B cell (primary cell): ENCODE measurements at regions of chr3 and their contacts with region 1.

Region 1: GRCh38 chr3:9731206-9732079 is at the start of gene BRPF1:
- DNase-seq: peak; percentile 99
- ATAC-seq: peak; percentile 94
- H3K4me3 ChIP-seq: peak within 1 kb of the TSS; percentile 76 to 93 (median 81)
- H3K4me3 Mint-ChIP-seq: peak within 1 kb of the TSS; percentile 97
- H3K27ac ChIP-seq: peak within 1 kb of the TSS; percentile 87 to 94
- H3K27ac Mint-ChIP-seq: peak within 1 kb of the TSS; percentile 97
- H3K4me1 ChIP-seq: peaks cover 28 to 36% of the 10 kb centered on the region in 2 donors
- H3K4me1 Mint-ChIP-seq: peaks cover 59% of the 10 kb centered on the region
- H3K27me3 ChIP-seq: no peaks in the 10 kb centered on the region
- H3K27me3 Mint-ChIP-seq: no peaks in the 10 kb centered on the region
- CTCF ChIP-seq: no peak
- total RNA-seq, gene BRPF1: 36.5 and 40.1 TPM in 2 replicates

Region 2: GRCh38 chr3:8963137-8963869 is 768.1 kb before region 1 on chr3 and contains the start of gene RAD18:
- CTCF ChIA-PET with region 1: no interaction called
- POLR2A ChIA-PET with region 1: no interaction called
- intact Hi-C with region 1: loop called (anchors 1 kb)
- DNase-seq: peak; percentile 95
- ATAC-seq: peak; percentile 97
- H3K4me3 ChIP-seq: peak within 1 kb of the TSS; percentile 79 to 93 (median 85)
- H3K4me3 Mint-ChIP-seq: peak within 1 kb of the TSS; percentile 89
- H3K27ac ChIP-seq: peak within 1 kb of the TSS; percentile 81 to 93
- H3K27ac Mint-ChIP-seq: peak within 1 kb of the TSS; percentile 94
- H3K4me1 ChIP-seq: peaks cover 18 to 25% of the 10 kb centered on the region in 2 donors
- H3K4me1 Mint-ChIP-seq: peaks cover 34% of the 10 kb centered on the region
- H3K27me3 ChIP-seq: peaks cover 0 to 3% (median 0%) of the 10 kb centered on the region in 4 experiments
- H3K27me3 Mint-ChIP-seq: peaks cover 7% of the 10 kb centered on the region
- CTCF ChIP-seq: no peak
- total RNA-seq, gene RAD18: 20.6 and 21.3 TPM in 2 replicates

Region 3: GRCh38 chr3:9396700-9397521 is 334.5 kb before region 1 on chr3:
- CTCF ChIA-PET with region 1: no interaction called
- POLR2A ChIA-PET with region 1: interaction called, 6 read pairs
- intact Hi-C with region 1: loop called (anchors 1 kb)
- DNase-seq: peak; percentile 99
- ATAC-seq: peak; percentile 70
- H3K4me3 ChIP-seq: peak overlapping the region; percentile 58 to 85 (median 67)
- H3K4me3 Mint-ChIP-seq: peak overlapping the region; percentile 89
- H3K27ac ChIP-seq: peak overlapping the region; percentile 94 to 96
- H3K27ac Mint-ChIP-seq: peak overlapping the region; percentile 100
- H3K4me1 ChIP-seq: peaks cover 40 to 56% of the 10 kb centered on the region in 2 donors
- H3K4me1 Mint-ChIP-seq: peaks cover 60% of the 10 kb centered on the region
- H3K27me3 ChIP-seq: no peaks in the 10 kb centered on the region
- H3K27me3 Mint-ChIP-seq: no peaks in the 10 kb centered on the region
- CTCF ChIP-seq: no peak

Region 4: GRCh38 chr3:9690451-9691450 is 40.7 kb before region 1 on chr3:
- CTCF ChIA-PET with region 1: interaction called, 7 read pairs
- POLR2A ChIA-PET with region 1: no interaction called
- intact Hi-C with region 1: loop called (anchors 1 kb)
- DNase-seq: peak; percentile 66
- ATAC-seq: peak; percentile 97
- H3K4me3 ChIP-seq: no peak overlapping the region
- H3K4me3 Mint-ChIP-seq: no peak overlapping the region
- H3K27ac ChIP-seq: no peak overlapping the region
- H3K27ac Mint-ChIP-seq: no peak overlapping the region
- H3K4me1 ChIP-seq: peaks cover 17 to 27% of the 10 kb centered on the region in 2 donors
- H3K4me1 Mint-ChIP-seq: peaks cover 25% of the 10 kb centered on the region
- H3K27me3 ChIP-seq: no peaks in the 10 kb centered on the region
- H3K27me3 Mint-ChIP-seq: no peaks in the 10 kb centered on the region
- CTCF ChIP-seq: no peak

Region 5: GRCh38 chr3:9779721-9780457 is 48.4 kb after region 1 on chr3:
- CTCF ChIA-PET with region 1: interaction called, 7 read pairs
- POLR2A ChIA-PET with region 1: no interaction called
- intact Hi-C with region 1: loop called (anchors 1 kb)
- DNase-seq: peak; percentile 73
- ATAC-seq: peak; percentile 74
- H3K4me3 ChIP-seq: peak overlapping the region in 3 of 5 experiments; percentile 1 to 18 (median 3)
- H3K4me3 Mint-ChIP-seq: peak overlapping the region; percentile 40
- H3K27ac ChIP-seq: peak overlapping the region; percentile 56 to 82
- H3K27ac Mint-ChIP-seq: peak overlapping the region; percentile 78
- H3K4me1 ChIP-seq: peaks cover 51 to 59% of the 10 kb centered on the region in 2 donors
- H3K4me1 Mint-ChIP-seq: peaks cover 59% of the 10 kb centered on the region
- H3K27me3 ChIP-seq: no peaks in the 10 kb centered on the region
- H3K27me3 Mint-ChIP-seq: no peaks in the 10 kb centered on the region
- CTCF ChIP-seq: no peak

Region 6: DNA sequence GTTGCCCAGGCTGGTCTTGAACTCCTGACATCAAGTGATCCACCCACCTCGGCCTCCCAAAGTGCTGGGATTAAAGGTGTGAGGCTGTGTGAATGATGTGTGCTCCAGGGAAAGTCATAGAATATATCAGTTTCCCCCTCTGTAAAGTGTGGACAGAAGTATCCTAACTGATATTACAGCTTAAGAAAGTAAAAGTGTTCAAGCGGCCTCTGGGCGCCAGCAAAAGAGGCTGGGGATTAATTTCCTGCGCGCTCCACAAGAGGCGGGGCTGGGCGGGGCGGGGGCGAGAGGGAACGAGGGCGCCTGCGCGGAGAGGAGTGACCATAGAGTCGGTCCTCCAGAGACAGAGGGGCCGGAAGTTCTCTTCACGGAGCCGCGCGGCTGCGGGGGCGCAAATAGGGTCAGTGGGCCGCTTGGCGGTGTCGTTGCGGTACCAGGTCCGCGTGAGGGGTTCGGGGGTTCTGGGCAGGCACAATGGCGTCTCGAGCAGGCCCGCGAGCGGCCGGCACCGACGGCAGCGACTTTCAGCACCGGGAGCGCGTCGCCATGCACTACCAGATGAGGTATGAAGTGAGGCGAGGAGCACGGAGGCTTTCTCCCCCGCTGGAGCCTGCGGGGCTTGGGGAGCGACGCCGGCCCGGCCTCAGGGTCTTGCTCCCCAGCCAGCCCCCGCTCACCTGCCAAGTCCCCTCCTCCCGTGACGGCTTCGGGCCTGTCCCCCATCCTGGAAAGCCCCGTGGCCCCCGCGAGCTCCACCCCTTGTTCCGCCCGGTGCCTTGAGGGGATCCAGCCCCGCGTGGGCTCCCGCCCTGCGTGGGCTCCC is 159.0 kb after region 1 on chr3 and contains the start of gene JAGN1:
- CTCF ChIA-PET with region 1: interaction called, 4 read pairs
- POLR2A ChIA-PET with region 1: interaction called, 6 read pairs
- intact Hi-C with region 1: loop called (anchors 1 kb)
- DNase-seq: peak; percentile 95
- ATAC-seq: peak; percentile 84
- H3K4me3 ChIP-seq: peak within 1 kb of the TSS; percentile 81 to 99 (median 98)
- H3K4me3 Mint-ChIP-seq: peak within 1 kb of the TSS; percentile 99
- H3K27ac ChIP-seq: peak within 1 kb of the TSS; percentile 100
- H3K27ac Mint-ChIP-seq: peak within 1 kb of the TSS; percentile 99
- H3K4me1 ChIP-seq: peaks cover 17 to 24% of the 10 kb centered on the region in 2 donors
- H3K4me1 Mint-ChIP-seq: peaks cover 38% of the 10 kb centered on the region
- H3K27me3 ChIP-seq: no peaks in the 10 kb centered on the region
- H3K27me3 Mint-ChIP-seq: no peaks in the 10 kb centered on the region
- CTCF ChIP-seq: no peak
- total RNA-seq, gene JAGN1: 25.7 and 26.2 TPM in 2 replicates

Region 7: GRCh38 chr3:10115326-10116137 is 384.1 kb after region 1 on chr3 and contains the start of gene BRK1:
- CTCF ChIA-PET with region 1: no interaction called
- POLR2A ChIA-PET with region 1: interaction called, 6 read pairs
- intact Hi-C with region 1: loop called (anchors 10 kb)
- DNase-seq: peak; percentile 98
- ATAC-seq: peak; percentile 96
- H3K4me3 ChIP-seq: peak within 1 kb of the TSS; percentile 61 to 96 (median 84)
- H3K4me3 Mint-ChIP-seq: peak within 1 kb of the TSS; percentile 94
- H3K27ac ChIP-seq: peak within 1 kb of the TSS; percentile 48 to 85
- H3K27ac Mint-ChIP-seq: peak within 1 kb of the TSS; percentile 97
- H3K4me1 ChIP-seq: peaks cover 16 to 27% of the 10 kb centered on the region in 2 donors
- H3K4me1 Mint-ChIP-seq: peaks cover 34% of the 10 kb centered on the region
- H3K27me3 ChIP-seq: no peaks in the 10 kb centered on the region
- H3K27me3 Mint-ChIP-seq: no peaks in the 10 kb centered on the region
- CTCF ChIP-seq: no peak
- total RNA-seq, gene BRK1: 82.8 and 86.3 TPM in 2 replicates